ENCODE measurements at regions of chr4 and their contacts with region 1.

Region 1: DNA sequence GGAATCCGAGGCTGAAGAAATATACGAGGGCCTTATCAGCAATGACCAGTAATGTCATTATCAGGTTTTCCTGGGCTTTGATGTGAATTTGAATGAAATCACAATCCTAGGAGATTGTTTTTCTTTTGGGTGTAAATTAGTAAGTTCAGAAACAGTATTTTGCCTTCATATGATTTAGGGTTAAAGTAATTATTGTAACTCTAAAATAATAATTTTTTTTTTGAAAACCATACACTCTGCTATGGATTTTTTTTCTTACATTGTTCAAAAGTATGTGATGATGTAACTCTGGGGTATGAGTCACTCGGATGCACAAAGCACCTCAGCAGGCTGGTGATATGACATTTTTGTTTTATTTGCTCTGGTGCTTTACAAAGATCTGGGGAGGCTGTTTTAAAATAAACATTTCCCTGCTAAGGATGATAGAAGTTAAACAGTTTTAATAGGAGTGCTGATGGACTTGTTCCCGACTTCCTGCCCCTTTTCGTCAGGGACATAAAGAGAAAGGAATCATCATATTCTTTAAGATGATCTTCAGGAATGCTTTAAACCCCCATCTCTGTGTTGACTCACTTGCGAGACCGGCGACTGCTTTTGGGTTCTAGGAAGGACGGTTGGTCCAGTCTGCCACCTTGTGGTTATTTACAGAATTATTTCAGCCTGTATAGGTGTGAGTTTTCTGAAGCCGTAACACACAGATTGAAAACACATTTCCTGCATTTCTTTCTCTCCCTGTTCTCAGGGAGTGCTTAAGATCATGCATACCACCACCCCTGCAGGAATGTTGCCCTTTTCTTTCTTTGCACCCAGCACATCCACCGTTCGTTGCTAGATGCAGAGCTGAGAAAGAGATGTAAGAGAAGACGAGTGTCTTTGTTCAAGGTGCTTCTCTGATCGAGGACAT is 72.5 kb downstream of the RAPGEF2 start:
- DNase-seq: peak; percentile 82 to 86
- H3K4me3 ChIP-seq: peak overlapping the region; percentile 22
- H3K4me3 Mint-ChIP-seq: peak overlapping the region; percentile 63
- H3K27ac Mint-ChIP-seq: peak overlapping the region; percentile 71
- H3K4me1 ChIP-seq: peaks cover 64% of the 10 kb centered on the region
- H3K4me1 Mint-ChIP-seq: peaks cover 72% of the 10 kb centered on the region
- H3K27me3 ChIP-seq: no peaks in the 10 kb centered on the region
- H3K27me3 Mint-ChIP-seq: no peaks in the 10 kb centered on the region
- CTCF ChIP-seq: peak; percentile 63 to 65

Region 2: GRCh38 chr4:158671915-158672806 is 503.2 kb before region 1 on chr4 and contains the start of gene ETFDH:
- CTCF ChIA-PET with region 1: no interaction called
- POLR2A ChIA-PET with region 1: no interaction called
- intact Hi-C with region 1: loop called (anchors 5 kb)
- DNase-seq: peak; percentile 98 to 99
- H3K4me3 ChIP-seq: peak within 1 kb of the TSS; percentile 80
- H3K4me3 Mint-ChIP-seq: peak within 1 kb of the TSS; percentile 100
- H3K27ac Mint-ChIP-seq: peak within 1 kb of the TSS; percentile 98
- H3K4me1 ChIP-seq: peaks cover 3% of the 10 kb centered on the region; the same call in 1 of the 2 replicates
- H3K4me1 Mint-ChIP-seq: peaks cover 7% of the 10 kb centered on the region
- H3K27me3 ChIP-seq: no peaks in the 10 kb centered on the region
- H3K27me3 Mint-ChIP-seq: no peaks in the 10 kb centered on the region
- CTCF ChIP-seq: peak; percentile 41 to 70
- total RNA-seq, gene ETFDH: 5.8 and 6.4 TPM in 2 replicates

Region 3: DNA sequence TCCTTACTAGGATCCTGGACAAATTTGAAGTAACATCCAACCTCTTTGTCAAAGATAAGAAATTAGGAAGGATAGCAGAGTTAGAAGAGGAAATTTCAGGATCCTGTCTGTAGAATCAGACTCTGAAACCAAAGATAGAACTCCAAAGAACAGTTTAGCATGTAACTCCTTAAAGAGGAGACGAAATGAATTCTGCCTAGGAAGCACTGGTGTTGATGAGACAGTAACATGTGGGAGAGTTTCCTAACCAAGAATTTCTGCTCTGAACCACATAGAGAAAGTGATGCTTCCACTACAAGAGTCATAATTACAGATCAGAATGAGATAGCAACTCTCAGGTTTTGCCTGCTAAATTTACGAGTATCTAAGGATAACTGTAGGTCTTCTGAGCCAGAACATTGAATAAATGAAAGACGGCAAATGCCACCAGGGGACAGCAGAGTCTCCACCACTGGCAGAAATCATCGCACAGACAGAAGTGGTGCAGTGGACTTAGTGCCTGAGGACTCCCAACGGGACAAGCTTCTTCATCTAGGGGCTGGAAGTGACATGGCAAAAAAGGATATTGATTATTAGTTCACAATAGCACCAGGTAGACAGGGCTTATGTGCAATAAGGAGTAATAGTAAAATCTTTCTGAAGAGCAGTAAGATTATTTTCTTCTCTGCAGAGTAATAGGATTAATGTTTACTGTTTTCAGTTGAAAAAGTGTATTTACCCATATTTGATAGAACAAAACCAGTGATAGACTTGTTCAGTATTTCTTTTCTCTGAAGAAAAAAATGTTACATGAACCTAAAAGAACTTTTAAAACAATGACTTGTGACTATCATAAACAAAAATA is 445.4 kb before region 1 on chr4:
- CTCF ChIA-PET with region 1: no interaction called
- POLR2A ChIA-PET with region 1: no interaction called
- intact Hi-C with region 1: loop called (anchors 1 kb)
- DNase-seq: peak; percentile 63 to 66
- H3K4me3 ChIP-seq: no peak overlapping the region
- H3K4me3 Mint-ChIP-seq: no peak overlapping the region
- H3K27ac Mint-ChIP-seq: no peak overlapping the region
- H3K4me1 ChIP-seq: no peaks in the 10 kb centered on the region
- H3K4me1 Mint-ChIP-seq: peaks cover 6% of the 10 kb centered on the region
- H3K27me3 ChIP-seq: no peaks in the 10 kb centered on the region
- H3K27me3 Mint-ChIP-seq: peaks cover 6% of the 10 kb centered on the region
- CTCF ChIP-seq: peak; percentile 65 to 78

Region 4: DNA sequence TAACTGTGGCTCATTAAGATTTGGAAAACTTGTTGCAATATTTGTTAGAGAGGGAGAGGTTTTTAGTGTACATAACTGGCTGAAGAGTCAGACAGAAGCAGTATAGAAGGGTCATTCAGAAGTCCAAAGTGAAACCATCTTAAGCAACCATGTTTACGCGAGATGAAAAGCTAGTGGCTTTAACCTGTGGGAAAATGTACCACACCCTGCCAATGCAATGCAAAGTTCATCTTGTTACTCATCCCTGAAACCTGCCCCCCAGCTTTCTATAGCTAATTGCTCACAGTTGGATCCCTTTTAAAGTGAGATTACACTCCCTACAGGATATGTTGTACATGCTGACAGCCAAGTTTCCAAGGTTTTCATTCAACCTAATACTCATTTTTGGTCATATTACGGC is 169.1 kb before region 1 on chr4:
- CTCF ChIA-PET with region 1: no interaction called
- POLR2A ChIA-PET with region 1: no interaction called
- intact Hi-C with region 1: loop called (anchors 2 kb)
- DNase-seq: peak; percentile 54 to 69
- H3K4me3 ChIP-seq: no peak overlapping the region
- H3K4me3 Mint-ChIP-seq: no peak overlapping the region
- H3K27ac Mint-ChIP-seq: peak overlapping the region; percentile 23
- H3K4me1 ChIP-seq: peaks cover 13% of the 10 kb centered on the region; the same call in 1 of the 2 replicates
- H3K4me1 Mint-ChIP-seq: peaks cover 6% of the 10 kb centered on the region
- H3K27me3 ChIP-seq: no peaks in the 10 kb centered on the region
- H3K27me3 Mint-ChIP-seq: no peaks in the 10 kb centered on the region
- CTCF ChIP-seq: no peak

Region 5: GRCh38 chr4:159129814-159130550 is 45.4 kb before region 1 on chr4:
- CTCF ChIA-PET with region 1: no interaction called
- POLR2A ChIA-PET with region 1: no interaction called
- intact Hi-C with region 1: loop called (anchors 1 kb)
- DNase-seq: peak; percentile 71 to 77
- H3K4me3 ChIP-seq: no peak overlapping the region
- H3K4me3 Mint-ChIP-seq: peak overlapping the region; percentile 61
- H3K27ac Mint-ChIP-seq: peak overlapping the region; percentile 79
- H3K4me1 ChIP-seq: peaks cover 66% of the 10 kb centered on the region
- H3K4me1 Mint-ChIP-seq: peaks cover 27% of the 10 kb centered on the region
- H3K27me3 ChIP-seq: no peaks in the 10 kb centered on the region
- H3K27me3 Mint-ChIP-seq: no peaks in the 10 kb centered on the region
- CTCF ChIP-seq: no peak

Region 6: DNA sequence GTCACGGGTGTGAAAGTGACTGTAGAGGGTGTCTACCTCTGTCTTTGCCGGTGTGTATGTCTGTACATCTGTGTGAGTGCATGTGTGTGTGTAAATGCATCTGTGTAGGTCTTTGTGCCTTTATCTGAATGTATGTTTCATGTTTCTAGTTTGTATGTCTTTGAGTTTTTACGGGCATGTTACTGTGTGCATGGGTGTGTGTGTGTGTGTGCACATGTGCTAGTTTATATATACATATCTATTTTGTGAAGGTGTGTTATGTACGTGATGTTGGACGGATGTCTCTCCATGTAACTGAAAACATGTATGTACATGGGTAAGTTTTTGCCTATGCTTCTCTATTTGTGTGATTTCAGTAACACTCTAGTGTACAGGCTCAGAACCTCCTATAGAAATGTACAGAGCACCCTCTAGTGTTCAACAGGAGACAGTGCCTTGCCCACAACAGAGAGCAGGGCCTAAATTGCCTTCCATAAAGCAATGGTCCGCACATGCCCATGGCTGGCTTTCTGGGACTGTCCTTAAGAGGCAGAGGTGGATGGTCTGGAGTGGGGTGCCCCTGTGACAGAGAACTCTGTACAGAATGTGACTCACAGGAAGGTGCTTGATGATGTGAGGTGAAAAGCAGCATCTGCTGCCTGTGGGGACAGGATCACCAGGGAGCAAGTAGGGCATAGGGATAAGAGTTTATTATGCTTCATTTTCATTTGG is 271.1 kb after region 1 on chr4:
- CTCF ChIA-PET with region 1: no interaction called
- POLR2A ChIA-PET with region 1: no interaction called
- intact Hi-C with region 1: loop called (anchors 2 kb)
- DNase-seq: peak; percentile 46 to 48
- H3K4me3 ChIP-seq: no peak overlapping the region
- H3K4me3 Mint-ChIP-seq: no peak overlapping the region
- H3K27ac Mint-ChIP-seq: no peak overlapping the region
- H3K4me1 ChIP-seq: no peaks in the 10 kb centered on the region
- H3K4me1 Mint-ChIP-seq: no peaks in the 10 kb centered on the region
- H3K27me3 ChIP-seq: no peaks in the 10 kb centered on the region
- H3K27me3 Mint-ChIP-seq: no peaks in the 10 kb centered on the region
- CTCF ChIP-seq: peak; percentile 72 to 87

Region 7: GRCh38 chr4:159677521-159677920 is 502.2 kb after region 1 on chr4:
- CTCF ChIA-PET with region 1: no interaction called
- POLR2A ChIA-PET with region 1: no interaction called
- intact Hi-C with region 1: no loop called
- DNase-seq: no peak
- H3K4me3 ChIP-seq: no peak overlapping the region
- H3K4me3 Mint-ChIP-seq: no peak overlapping the region
- H3K27ac Mint-ChIP-seq: no peak overlapping the region
- H3K4me1 ChIP-seq: no peaks in the 10 kb centered on the region
- H3K4me1 Mint-ChIP-seq: no peaks in the 10 kb centered on the region
- H3K27me3 ChIP-seq: no peaks in the 10 kb centered on the region
- H3K27me3 Mint-ChIP-seq: no peaks in the 10 kb centered on the region
- CTCF ChIP-seq: no peak

Measured in Caco-2 (cell line).